ENCODE measurements at regions of chr21 and their contacts with region 1.

Region 1: DNA sequence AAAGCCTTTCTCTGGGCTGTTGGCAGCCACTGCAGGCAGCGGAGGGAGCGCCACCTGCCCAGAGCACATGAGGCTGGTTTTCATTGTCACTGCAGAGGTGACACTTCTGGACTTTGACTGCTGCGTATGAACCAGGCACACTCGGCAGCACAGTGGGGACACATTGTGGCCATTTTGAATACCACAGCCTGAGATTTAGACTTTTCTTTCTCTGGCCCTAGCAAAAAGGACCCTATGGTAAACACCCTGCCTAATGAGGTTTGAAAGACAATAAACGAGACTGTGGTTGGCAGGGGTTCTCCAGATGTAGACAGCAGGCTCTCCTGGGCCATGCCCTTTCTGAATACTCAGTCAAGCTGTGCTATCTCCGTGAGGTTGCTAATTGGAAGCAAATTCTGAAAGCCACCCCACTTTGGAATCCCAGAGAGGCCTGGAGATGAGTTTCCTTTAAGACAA is 12.0 kb upstream of the KCNE2 start:
- DNase-seq: no peak
- H3K4me3 ChIP-seq: no peak overlapping the region
- CTCF ChIP-seq: peak; percentile 65

Region 2: GRCh38 chr21:33915368-33916199 is 436.2 kb before region 1 on chr21 and contains the start of gene ATP5PO:
- CTCF ChIA-PET with region 1: interaction called, 500 read pairs
- POLR2A ChIA-PET with region 1: no interaction called
- DNase-seq: peak; percentile 85
- H3K4me3 ChIP-seq: peak within 1 kb of the TSS; percentile 97
- CTCF ChIP-seq: no peak

Region 3: GRCh38 chr21:33940164-33940880 is 411.5 kb before region 1 on chr21:
- CTCF ChIA-PET with region 1: interaction called, 11 read pairs
- POLR2A ChIA-PET with region 1: no interaction called
- DNase-seq: peak; percentile 76
- H3K4me3 ChIP-seq: no peak overlapping the region
- CTCF ChIP-seq: no peak

Region 4: DNA sequence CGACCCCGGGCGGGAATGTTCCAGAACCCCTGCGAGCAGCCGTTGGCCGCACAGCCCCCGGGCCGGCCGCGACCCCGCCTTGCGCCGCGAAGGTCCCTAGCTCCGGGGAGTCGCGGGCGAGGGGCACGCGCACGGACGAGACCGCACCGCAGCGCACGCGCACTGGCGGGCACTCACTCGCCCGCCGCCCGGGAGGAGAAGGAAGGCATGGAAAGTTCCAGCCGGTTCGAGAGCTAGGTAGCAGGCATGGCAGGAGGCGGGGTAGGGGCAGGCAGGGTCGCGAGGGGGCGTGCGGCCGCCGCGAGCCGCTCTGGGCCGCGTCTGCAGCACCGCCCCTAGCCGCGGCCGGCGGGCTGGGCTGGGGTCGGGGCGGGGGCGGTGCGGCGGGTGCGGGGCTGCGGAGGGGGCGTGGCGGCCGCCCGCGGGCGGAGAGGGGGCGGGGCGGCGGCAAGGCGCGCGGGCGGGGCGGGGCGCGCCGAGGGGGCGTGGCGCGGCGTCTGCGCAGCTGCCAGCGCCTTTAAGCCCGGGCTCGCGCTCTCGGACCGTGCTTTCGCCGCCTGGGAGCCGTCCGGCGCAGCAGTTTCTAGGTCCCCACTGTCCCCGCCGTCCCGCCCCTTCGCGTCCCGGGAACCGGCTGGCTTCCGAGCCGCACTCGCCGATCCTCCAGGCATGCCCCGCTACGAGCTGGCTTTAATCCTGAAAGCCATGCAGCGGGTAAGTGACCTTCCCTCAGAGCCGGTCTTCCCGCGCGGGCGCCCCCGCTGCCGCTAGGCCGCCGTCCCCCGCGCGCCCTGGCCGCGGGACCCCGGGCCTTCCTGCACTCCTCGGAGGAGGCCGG is 278.6 kb before region 1 on chr21 and contains the starts of genes MRPS6 and SLC5A3:
- CTCF ChIA-PET with region 1: interaction called, 20 read pairs
- POLR2A ChIA-PET with region 1: no interaction called
- DNase-seq: no peak
- H3K4me3 ChIP-seq: peak within 1 kb of the TSS; percentile 85
- CTCF ChIP-seq: no peak

Region 5: GRCh38 chr21:34129039-34129891 is 222.5 kb before region 1 on chr21:
- CTCF ChIA-PET with region 1: interaction called, 23 read pairs
- POLR2A ChIA-PET with region 1: no interaction called
- DNase-seq: peak; percentile 58
- H3K4me3 ChIP-seq: peak overlapping the region; percentile 29
- CTCF ChIP-seq: peak; percentile 62

Region 6: DNA sequence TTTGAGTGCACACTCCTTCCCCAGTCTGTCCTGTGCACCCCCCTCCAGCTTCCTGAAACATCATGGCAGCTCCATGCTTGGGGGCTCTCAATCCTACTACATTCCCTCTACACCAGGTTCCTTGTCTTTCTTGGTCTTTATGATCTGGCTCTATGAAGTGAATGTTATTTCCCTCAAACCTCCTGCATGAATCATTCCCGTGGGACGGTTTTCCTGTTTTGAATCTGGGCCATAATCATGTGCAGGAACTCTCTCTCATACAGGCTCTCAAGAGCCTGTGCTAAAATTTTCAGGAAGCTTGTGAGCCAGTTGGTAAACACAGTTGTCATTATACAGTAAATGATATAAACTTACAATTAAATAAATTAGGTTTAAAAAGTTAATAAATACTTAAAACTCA is 77.8 kb before region 1 on chr21:
- CTCF ChIA-PET with region 1: no interaction called
- POLR2A ChIA-PET with region 1: no interaction called
- DNase-seq: peak; percentile 9
- H3K4me3 ChIP-seq: no peak overlapping the region
- CTCF ChIP-seq: no peak

Region 7: GRCh38 chr21:34336756-34337391 is 14.9 kb before region 1 on chr21:
- CTCF ChIA-PET with region 1: interaction called, 88 read pairs
- POLR2A ChIA-PET with region 1: no interaction called
- DNase-seq: peak; percentile 14
- H3K4me3 ChIP-seq: no peak overlapping the region
- CTCF ChIP-seq: no peak

Region 8: GRCh38 chr21:34367321-34367935 is 15.6 kb after region 1 on chr21:
- CTCF ChIA-PET with region 1: interaction called, 215 read pairs
- POLR2A ChIA-PET with region 1: no interaction called
- DNase-seq: peak; percentile 60
- H3K4me3 ChIP-seq: no peak overlapping the region
- CTCF ChIP-seq: peak; percentile 66

Measured in AG04449 (cell line).